Psoas muscle (tissue), 8 donors: ENCODE measurements at regions of chr16 and their contacts with region 1.

Region 1: DNA sequence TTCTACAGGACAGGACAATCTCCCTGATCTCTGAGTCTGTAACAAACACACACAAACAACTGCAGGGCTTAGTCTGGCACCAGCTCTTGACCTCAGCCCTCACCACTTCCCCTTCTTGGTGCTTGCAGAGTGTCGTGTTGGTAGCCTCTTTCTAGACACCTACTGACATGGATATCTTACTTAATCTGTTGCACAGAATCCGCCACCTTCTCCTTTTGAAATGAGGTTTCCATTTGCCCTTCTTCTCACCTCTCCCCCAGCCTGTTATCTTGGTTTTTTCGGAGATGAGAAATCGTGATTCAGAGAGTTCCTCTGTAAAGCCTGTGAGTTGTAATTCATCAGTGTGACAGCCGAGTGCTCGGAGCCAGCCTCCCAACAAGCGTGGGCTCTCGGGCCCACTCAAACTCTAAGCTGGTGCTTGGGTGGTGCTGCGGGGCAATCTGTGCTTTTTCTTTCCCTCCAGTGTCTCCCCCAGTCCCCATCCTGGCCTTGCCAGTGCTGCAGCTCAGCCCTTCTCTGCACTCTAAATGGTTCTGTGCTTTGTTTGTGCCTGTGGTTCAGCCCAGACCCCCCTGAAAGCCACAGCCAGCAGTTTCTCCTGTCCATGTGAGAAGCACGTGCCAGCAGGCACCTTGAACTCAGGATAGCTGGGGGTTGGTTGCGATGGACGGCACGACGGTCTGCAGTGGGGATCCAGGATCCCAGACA is 28.1 kb downstream of the KIAA0513 start:
- DNase-seq: no peak
- ATAC-seq: peak; percentile 60 to 78 (median 70)
- H3K4me3 ChIP-seq: peak overlapping the region; percentile 33
- H3K27ac ChIP-seq: peak overlapping the region; percentile 50
- H3K4me1 ChIP-seq: peaks cover 9% of the 10 kb centered on the region
- H3K27me3 ChIP-seq: no peaks in the 10 kb centered on the region
- CTCF ChIP-seq: no peak

Region 2: GRCh38 chr16:84995663-84996062 is 60.0 kb before region 1 on chr16:
- intact Hi-C with region 1: loop called in 1 of 2 experiments (anchors 10 kb)
- DNase-seq: peak in 1 of 2 donors; percentile 75
- ATAC-seq: peak; percentile 36 to 77 (median 54)
- H3K4me3 ChIP-seq: no peak overlapping the region
- H3K27ac ChIP-seq: peak overlapping the region; percentile 78
- H3K4me1 ChIP-seq: peaks cover 35% of the 10 kb centered on the region
- H3K27me3 ChIP-seq: no peaks in the 10 kb centered on the region
- CTCF ChIP-seq: no peak